GM12878 (cell line): ENCODE measurements at regions of chr14 and their contacts with region 1.

Region 1: GRCh38 chr14:71148627-71149026 is 241.4 kb downstream of the PCNX1 start:
- DNase-seq: no peak
- ATAC-seq: no peak
- H3K4me3 ChIP-seq: no peak overlapping the region
- H3K27ac ChIP-seq: no peak overlapping the region
- H3K4me1 ChIP-seq: no peaks in the 10 kb centered on the region
- H3K27me3 ChIP-seq: no peaks in the 10 kb centered on the region
- CTCF ChIP-seq: no peak
- EP300 ChIP-seq: no peak
- POLR2A ChIP-seq: no peak
- RAD21 ChIP-seq: no peak

Region 2: DNA sequence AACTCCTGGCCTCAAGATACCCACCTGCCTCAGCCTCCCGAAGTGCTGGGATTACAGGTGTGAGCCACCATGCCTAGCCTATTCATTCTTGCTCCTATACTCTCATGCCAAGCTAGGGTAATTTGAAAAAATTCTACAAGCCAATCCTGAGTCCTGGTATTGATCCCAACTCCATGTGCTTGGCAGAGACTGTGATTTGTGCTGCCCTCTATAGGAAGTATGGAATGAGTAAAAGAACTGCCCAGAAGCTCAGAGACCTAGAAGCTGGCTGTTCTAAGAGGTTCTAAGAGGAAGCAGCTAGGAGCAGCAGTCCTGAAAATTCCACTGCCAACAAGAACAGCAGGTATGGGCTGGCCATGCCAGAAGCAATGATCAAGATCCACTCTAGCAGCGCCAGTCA is 161.1 kb after region 1 on chr14:
- CTCF ChIA-PET with region 1: interaction called, 7 read pairs
- POLR2A ChIA-PET with region 1: no interaction called
- RAD21 ChIA-PET with region 1: no interaction called
- SMC1A ChIA-PET with region 1: interaction called, 3 read pairs
- in situ Hi-C with region 1: loop called (anchors 5 kb)
- intact Hi-C with region 1: no loop called
- DNase-seq: no peak
- ATAC-seq: no peak
- H3K4me3 ChIP-seq: no peak overlapping the region
- H3K27ac ChIP-seq: no peak overlapping the region
- H3K4me1 ChIP-seq: no peaks in the 10 kb centered on the region
- H3K27me3 ChIP-seq: no peaks in the 10 kb centered on the region
- CTCF ChIP-seq: no peak
- EP300 ChIP-seq: no peak
- POLR2A ChIP-seq: no peak
- RAD21 ChIP-seq: no peak; the same call in 1 of the 2 replicates

Region 3: DNA sequence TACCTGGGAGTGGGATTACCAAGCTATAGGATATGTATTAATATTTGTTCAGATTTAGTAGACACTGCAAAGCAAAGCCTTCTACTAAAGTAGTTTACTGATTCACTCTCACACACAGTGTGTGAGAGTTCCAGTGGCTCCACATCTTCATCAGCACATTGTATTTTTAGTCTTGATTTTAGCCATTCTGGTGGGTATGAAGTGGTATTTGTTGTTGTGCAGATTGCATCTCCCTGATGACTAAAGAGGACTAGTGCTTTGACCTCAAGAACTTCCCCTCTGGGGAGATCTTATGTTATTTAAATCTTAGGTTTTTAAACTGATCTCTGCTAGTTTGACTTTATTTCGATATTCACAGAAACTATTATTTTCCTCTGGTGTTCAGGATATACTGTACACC is 303.9 kb after region 1 on chr14:
- CTCF ChIA-PET with region 1: no interaction called
- POLR2A ChIA-PET with region 1: no interaction called
- RAD21 ChIA-PET with region 1: no interaction called
- SMC1A ChIA-PET with region 1: no interaction called
- in situ Hi-C with region 1: no loop called
- intact Hi-C with region 1: no loop called
- DNase-seq: no peak
- ATAC-seq: peak; percentile 73
- H3K4me3 ChIP-seq: no peak overlapping the region
- H3K27ac ChIP-seq: no peak overlapping the region
- H3K4me1 ChIP-seq: no peaks in the 10 kb centered on the region
- H3K27me3 ChIP-seq: no peaks in the 10 kb centered on the region
- CTCF ChIP-seq: no peak
- EP300 ChIP-seq: no peak
- POLR2A ChIP-seq: no peak
- RAD21 ChIP-seq: no peak